Naive thymus-derived CD8-positive, alpha-beta T cell (primary cell): ENCODE measurements at regions of chr17 and their contacts with region 1.

Region 1: DNA sequence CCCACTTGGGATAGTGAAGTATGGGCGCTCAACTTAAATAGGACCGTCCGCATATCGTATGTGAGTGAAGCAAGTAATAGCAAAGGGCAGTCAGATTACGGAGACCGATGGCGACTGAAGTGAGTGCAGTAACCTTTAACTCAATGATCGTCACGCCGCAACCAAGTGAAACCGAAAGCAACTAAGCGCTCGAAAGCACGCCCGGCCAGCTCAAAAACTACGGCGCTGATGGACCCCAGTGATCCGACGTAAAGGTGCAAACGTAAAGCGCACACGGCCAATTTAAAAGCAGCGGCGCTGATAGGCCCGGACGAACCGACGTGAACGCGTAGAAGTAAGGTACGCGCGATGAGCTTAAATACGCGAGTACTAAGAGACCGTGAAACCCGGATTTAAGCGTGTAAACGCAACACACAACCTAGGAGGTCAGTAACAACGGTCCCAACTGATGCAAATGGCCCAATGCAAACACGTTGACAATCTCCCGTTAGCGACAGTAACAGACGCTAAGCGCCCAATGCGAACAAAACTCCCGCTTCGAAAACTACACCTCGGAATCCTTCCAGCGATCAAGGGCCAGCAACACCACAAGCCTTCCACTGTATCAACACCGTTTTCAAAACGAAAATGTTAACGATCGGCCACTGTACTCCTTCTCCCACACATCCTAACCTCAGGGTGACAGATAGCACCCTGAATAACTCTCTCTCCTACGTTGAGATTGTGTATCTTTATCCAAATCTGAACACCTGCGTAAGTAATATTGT is 37.9 kb upstream of the ARL4D start:
- DNase-seq: peak; percentile 72 to 97 (median 94)
- ATAC-seq: peak; percentile 84
- H3K4me3 Mint-ChIP-seq: peak overlapping the region; percentile 85 to 96 (median 94)
- H3K27ac Mint-ChIP-seq: peak overlapping the region; percentile 98 to 100 (median 100)
- H3K4me1 Mint-ChIP-seq: peaks cover 31 to 56% (median 50%) of the 10 kb centered on the region in 4 donors
- H3K27me3 Mint-ChIP-seq: peaks cover 0 to 4% (median 0%) of the 10 kb centered on the region in 5 donors

Region 2: GRCh38 chr17:43006639-43007551 is 354.0 kb before region 1 on chr17 and contains the start of gene IFI35:
- POLR2A ChIA-PET with region 1: interaction called, 20 read pairs
- DNase-seq: peak; percentile 66 to 91 (median 82)
- ATAC-seq: peak; percentile 99
- H3K4me3 Mint-ChIP-seq: peak within 1 kb of the TSS; percentile 98 to 100 (median 99)
- H3K27ac Mint-ChIP-seq: peak within 1 kb of the TSS; percentile 98 to 100 (median 99)
- H3K4me1 Mint-ChIP-seq: peaks cover 8 to 35% (median 27%) of the 10 kb centered on the region in 4 donors
- H3K27me3 Mint-ChIP-seq: no peaks in the 10 kb centered on the region
- polyA plus RNA-seq, gene IFI35: 44.8 to 49.8 (median 47.2) TPM

Region 3: GRCh38 chr17:43170766-43171585 is 189.9 kb before region 1 on chr17 and contains the start of gene NBR1:
- POLR2A ChIA-PET with region 1: interaction called, 25 read pairs
- DNase-seq: peak; percentile 76 to 99 (median 96)
- ATAC-seq: peak; percentile 78 to 83
- H3K4me3 Mint-ChIP-seq: no peak within 1 kb of the TSS
- H3K27ac Mint-ChIP-seq: no peak within 1 kb of the TSS
- H3K4me1 Mint-ChIP-seq: peaks cover 14 to 37% (median 28%) of the 10 kb centered on the region in 4 donors
- H3K27me3 Mint-ChIP-seq: no peaks in the 10 kb centered on the region
- polyA plus RNA-seq, gene NBR1: 63.3 to 73.2 (median 68.1) TPM

Region 4: DNA sequence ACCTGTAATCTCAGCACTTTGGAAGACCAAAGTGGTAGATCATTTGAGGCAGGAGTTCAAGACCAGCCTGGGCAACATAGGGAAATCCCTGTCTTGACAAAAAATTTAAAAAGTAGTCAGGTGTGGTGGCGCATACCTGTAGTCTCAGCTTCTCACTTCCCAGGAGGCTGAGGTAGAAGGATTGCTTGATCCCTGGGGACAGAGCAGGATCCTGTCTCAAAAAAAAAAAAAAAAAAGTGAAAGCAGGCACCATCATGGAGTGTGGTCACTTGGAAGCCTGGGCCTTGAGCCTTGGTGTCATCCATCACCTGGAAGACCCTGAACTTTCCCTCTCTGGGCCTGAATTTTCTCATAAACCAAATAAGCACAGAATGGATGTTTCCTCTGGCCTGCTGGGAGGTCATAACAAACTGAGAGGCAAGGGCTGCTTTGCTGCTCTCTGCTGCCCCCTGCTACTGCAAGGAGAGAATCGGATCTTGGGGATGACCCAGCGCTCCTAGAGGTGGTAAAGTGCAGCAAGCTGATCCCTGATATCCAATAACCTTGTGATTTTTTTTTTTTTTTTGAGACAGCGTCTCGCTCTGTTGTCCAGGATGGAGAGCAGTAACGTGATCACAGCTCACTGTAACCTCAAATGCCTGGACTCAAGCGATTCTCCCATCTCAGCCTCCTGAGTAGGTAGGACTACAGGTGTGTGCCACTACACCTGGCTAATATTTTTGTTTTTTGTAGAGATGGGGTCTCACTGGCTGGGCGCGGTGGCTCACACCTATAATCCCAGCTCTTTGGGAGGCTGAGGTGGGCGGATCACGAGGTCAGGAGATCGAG is 51.2 kb before region 1 on chr17:
- POLR2A ChIA-PET with region 1: interaction called, 160 read pairs
- DNase-seq: peak in 2 of 10 donors; percentile 8 to 24
- ATAC-seq: no peak
- H3K4me3 Mint-ChIP-seq: no peak overlapping the region
- H3K27ac Mint-ChIP-seq: no peak overlapping the region
- H3K4me1 Mint-ChIP-seq: peaks cover 0 to 3% (median 0%) of the 10 kb centered on the region in 4 donors
- H3K27me3 Mint-ChIP-seq: no peaks in the 10 kb centered on the region

Region 5: DNA sequence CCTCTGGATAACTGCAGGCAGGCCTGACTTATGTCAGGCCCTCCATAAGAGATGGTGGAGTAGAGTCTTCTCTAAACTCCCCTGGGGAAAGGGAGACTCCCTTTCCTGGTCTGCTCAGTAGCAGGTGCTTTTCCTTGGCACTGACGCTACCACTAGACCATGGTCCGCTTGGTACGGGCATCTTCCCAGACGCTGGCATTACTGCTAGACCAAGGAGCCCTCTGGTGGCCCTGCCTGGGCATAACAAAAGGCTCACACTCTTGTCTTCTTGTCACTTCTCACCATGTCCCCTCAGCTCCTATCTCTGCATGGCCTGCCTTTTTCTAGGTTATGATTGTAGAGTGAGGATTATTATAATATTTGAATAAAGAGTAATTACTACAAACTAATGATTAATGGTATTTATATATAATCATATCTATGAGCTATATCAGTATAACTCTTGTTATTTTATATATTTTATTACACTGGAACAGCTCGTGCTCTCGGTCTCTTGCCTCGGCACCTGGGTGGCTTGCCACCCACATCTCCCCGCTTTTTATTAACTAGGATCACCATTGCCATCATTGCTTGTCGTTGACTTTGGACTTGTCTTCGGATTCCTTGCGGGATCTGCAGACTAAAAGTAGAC is 21.9 kb before region 1 on chr17:
- POLR2A ChIA-PET with region 1: interaction called, 15 read pairs
- DNase-seq: peak; percentile 33 to 83 (median 52)
- ATAC-seq: no peak
- H3K4me3 Mint-ChIP-seq: no peak overlapping the region
- H3K27ac Mint-ChIP-seq: peak overlapping the region in 2 of 10 donors; percentile 18 to 59
- H3K4me1 Mint-ChIP-seq: peaks cover 7 to 15% (median 12%) of the 10 kb centered on the region in 4 donors
- H3K27me3 Mint-ChIP-seq: no peaks in the 10 kb centered on the region

Region 6: GRCh38 chr17:43388359-43389045 is 27.6 kb after region 1 on chr17:
- POLR2A ChIA-PET with region 1: interaction called, 755 read pairs
- DNase-seq: peak; percentile 88 to 95 (median 92)
- ATAC-seq: peak; percentile 70 to 72
- H3K4me3 Mint-ChIP-seq: peak overlapping the region; percentile 93 to 97 (median 95)
- H3K27ac Mint-ChIP-seq: peak overlapping the region; percentile 95 to 100 (median 99)
- H3K4me1 Mint-ChIP-seq: peaks cover 15 to 38% (median 37%) of the 10 kb centered on the region in 4 donors
- H3K27me3 Mint-ChIP-seq: no peaks in the 10 kb centered on the region

Region 7: GRCh38 chr17:43439041-43439440 is 78.1 kb after region 1 on chr17:
- POLR2A ChIA-PET with region 1: no interaction called
- DNase-seq: no peak
- ATAC-seq: no peak
- H3K4me3 Mint-ChIP-seq: no peak overlapping the region
- H3K27ac Mint-ChIP-seq: no peak overlapping the region
- H3K4me1 Mint-ChIP-seq: no peaks in the 10 kb centered on the region
- H3K27me3 Mint-ChIP-seq: peaks cover 3 to 23% (median 16%) of the 10 kb centered on the region in 5 donors

Region 8: DNA sequence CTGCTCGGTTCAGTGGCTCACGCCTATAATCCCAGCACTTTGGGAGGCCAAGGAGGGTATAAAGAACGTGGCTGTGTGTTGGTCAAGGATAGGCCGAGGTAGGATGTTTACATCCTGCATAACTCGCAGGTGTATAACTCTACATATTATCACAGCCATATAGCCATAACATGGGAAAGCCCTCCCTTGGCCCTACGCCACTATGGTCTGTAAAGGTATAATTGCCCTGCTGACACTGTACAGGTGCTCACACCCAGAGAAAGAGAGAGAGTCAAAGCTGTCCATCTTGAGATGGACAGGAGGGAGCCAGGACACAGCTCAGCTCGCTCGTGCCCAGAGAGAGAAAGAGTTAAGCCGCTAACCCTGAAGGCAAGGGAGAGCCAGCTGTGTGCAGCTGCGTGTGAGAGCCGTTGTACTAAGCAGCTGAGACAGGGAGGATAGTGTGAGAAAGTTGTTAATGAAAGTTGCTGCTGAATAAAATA is 92.5 kb after region 1 on chr17:
- POLR2A ChIA-PET with region 1: no interaction called
- DNase-seq: no peak
- ATAC-seq: no peak
- H3K4me3 Mint-ChIP-seq: no peak overlapping the region
- H3K27ac Mint-ChIP-seq: no peak overlapping the region
- H3K4me1 Mint-ChIP-seq: peaks cover 2 to 10% (median 6%) of the 10 kb centered on the region in 4 donors
- H3K27me3 Mint-ChIP-seq: peaks cover 0 to 11% (median 4%) of the 10 kb centered on the region in 5 donors

Region 9: GRCh38 chr17:43483674-43484372 is 122.9 kb after region 1 on chr17 and contains the start of gene DHX8:
- POLR2A ChIA-PET with region 1: interaction called, 91 read pairs
- DNase-seq: peak; percentile 96 to 99 (median 98)
- ATAC-seq: peak; percentile 94 to 96
- H3K4me3 Mint-ChIP-seq: peak within 1 kb of the TSS; percentile 95 to 100 (median 100)
- H3K27ac Mint-ChIP-seq: peak within 1 kb of the TSS; percentile 97 to 100 (median 100)
- H3K4me1 Mint-ChIP-seq: peaks cover 10 to 48% (median 35%) of the 10 kb centered on the region in 4 donors
- H3K27me3 Mint-ChIP-seq: no peaks in the 10 kb centered on the region
- polyA plus RNA-seq, gene DHX8: 16.3 to 28.4 (median 28.2) TPM